ENCODE measurements at regions of chr16 and their contacts with region 1.

Region 1: DNA sequence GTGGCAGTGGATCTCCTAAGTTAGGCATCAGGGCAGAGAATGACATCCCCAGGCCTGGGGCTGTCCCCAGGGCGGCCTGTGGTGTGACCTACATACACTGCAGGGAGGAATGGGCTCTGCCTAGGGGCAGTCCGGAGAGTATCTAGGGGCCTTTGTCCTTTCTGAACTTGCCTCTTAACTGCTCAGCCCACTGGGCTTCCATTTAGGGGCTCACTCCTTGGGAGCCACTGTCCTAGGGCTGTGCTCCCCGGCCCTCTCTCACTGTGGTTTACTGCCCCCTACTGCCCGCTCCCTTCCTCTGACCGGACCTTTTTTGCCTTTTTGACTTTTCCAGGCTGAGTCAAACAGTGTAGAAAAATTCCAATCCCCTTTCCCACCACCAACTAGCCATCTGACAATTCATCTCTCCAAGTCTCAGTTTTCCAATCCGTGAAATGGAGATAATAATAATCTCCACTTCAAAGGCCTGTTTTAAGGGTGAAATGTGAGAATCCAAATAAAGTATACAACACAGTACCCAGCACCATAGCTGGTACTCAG is 66.8 kb downstream of the DNAH3 start:
- DNase-seq: peak; percentile 87
- H3K4me3 Mint-ChIP-seq: no peak overlapping the region
- H3K27ac Mint-ChIP-seq: no peak overlapping the region
- H3K4me1 Mint-ChIP-seq: no peaks in the 10 kb centered on the region
- H3K27me3 Mint-ChIP-seq: peaks cover 8% of the 10 kb centered on the region

Region 2: GRCh38 chr16:20774703-20775362 is 309.0 kb before region 1 on chr16:
- intact Hi-C with region 1: no loop called
- DNase-seq: peak; percentile 89
- H3K4me3 Mint-ChIP-seq: no peak overlapping the region
- H3K27ac Mint-ChIP-seq: no peak overlapping the region
- H3K4me1 Mint-ChIP-seq: no peaks in the 10 kb centered on the region
- H3K27me3 Mint-ChIP-seq: no peaks in the 10 kb centered on the region

Region 3: GRCh38 chr16:20799599-20799998 is 284.2 kb before region 1 on chr16:
- intact Hi-C with region 1: loop called (anchors 1 kb)
- DNase-seq: no peak
- H3K4me3 Mint-ChIP-seq: no peak overlapping the region
- H3K27ac Mint-ChIP-seq: no peak overlapping the region
- H3K4me1 Mint-ChIP-seq: peaks cover 17% of the 10 kb centered on the region
- H3K27me3 Mint-ChIP-seq: no peaks in the 10 kb centered on the region

Region 4: DNA sequence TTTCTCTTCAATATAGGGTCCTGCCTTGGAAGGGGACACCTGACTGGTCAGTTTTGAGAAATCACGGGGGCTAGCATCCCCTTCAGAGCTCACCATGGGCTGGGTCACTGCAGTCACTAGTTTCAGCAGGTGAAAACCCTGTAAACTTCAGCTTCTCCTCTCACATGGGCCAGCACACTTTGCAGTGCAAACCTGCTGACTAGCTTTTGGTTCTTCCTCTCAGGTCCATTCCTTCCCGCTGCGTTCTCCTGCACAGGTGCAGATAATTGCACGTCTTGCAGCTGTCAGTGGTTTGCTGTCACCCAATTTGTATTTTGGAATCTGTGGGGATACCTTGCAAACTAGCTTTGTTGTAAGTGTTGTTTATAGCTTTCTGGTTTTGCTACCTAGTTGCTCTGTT is 88.1 kb before region 1 on chr16:
- intact Hi-C with region 1: no loop called
- DNase-seq: no peak
- H3K4me3 Mint-ChIP-seq: no peak overlapping the region
- H3K27ac Mint-ChIP-seq: no peak overlapping the region
- H3K4me1 Mint-ChIP-seq: no peaks in the 10 kb centered on the region
- H3K27me3 Mint-ChIP-seq: peaks cover 11% of the 10 kb centered on the region

Measured in activated CD4-positive, alpha-beta T cell treated with anti-CD3 and anti-CD28 coated beads, Interleukin-2, amount 10 ng/mL, durations not matched to agents 24 days and 14 days (primary cell).